Head of caudate nucleus (tissue), 42 donors: ENCODE measurements at regions of chr2 and their contacts with region 1.

Region 1: GRCh38 chr2:62705007-62705829 is at the start of gene EHBP1:
- DNase-seq: peak; percentile 98 to 100 (median 99)

Region 2: GRCh38 chr2:62505750-62506420 is 199.3 kb before region 1 on chr2 and contains the start of gene TMEM17:
- intact Hi-C with region 1: loop called (anchors 2 kb)
- DNase-seq: peak; percentile 73 to 96 (median 89)

Region 3: DNA sequence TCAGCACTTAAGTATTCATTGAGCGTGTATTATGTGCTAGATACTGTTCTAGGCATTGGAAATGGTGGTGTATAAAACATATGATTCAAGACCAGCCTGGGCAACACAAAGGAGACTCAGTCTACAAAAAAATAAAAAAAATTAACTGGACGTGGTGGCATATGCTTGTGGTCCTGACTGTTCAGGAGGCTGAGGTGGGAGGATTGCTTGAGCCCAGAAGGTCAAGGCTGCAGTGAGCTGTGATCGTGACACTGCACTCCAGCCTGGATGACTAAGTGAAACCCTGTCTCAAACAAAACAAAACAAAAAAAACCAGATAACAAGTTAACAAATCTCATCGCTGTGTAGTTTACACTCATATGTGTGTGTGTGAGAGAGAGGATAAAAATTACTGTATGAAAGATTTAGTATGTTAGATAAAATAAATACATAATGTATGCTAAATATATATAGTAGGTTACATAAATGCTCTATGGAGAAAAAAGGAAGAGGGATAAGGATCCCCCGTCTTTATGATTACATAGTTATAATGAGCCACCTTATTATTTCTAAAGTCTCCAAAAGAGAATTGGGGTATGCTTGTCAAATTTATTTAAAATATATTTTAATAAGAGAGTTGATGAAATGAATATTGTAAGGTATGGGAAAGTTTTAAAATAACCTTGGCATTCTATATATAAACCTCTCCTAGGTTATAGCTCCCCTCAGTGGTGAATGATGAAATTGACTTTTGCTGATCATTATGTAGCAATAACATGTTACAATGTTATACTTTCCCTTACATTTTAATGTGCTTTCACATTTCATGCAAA is 69.5 kb after region 1 on chr2:
- intact Hi-C with region 1: loop called (anchors 10 kb)
- DNase-seq: peak in 6 of 42 donors; percentile 11 to 43 (median 23)

Region 4: GRCh38 chr2:62874881-62875383 is 169.7 kb after region 1 on chr2:
- intact Hi-C with region 1: no loop called
- DNase-seq: no peak